Activated CD4-positive, alpha-beta memory T cell treated with anti-CD3 and anti-CD28 coated beads, Interleukin-2, amount 10 ng/mL, durations not matched to agents 7 days and 5 days (primary cell): ENCODE measurements at regions of chr13 and their contacts with region 1.

Region 1: DNA sequence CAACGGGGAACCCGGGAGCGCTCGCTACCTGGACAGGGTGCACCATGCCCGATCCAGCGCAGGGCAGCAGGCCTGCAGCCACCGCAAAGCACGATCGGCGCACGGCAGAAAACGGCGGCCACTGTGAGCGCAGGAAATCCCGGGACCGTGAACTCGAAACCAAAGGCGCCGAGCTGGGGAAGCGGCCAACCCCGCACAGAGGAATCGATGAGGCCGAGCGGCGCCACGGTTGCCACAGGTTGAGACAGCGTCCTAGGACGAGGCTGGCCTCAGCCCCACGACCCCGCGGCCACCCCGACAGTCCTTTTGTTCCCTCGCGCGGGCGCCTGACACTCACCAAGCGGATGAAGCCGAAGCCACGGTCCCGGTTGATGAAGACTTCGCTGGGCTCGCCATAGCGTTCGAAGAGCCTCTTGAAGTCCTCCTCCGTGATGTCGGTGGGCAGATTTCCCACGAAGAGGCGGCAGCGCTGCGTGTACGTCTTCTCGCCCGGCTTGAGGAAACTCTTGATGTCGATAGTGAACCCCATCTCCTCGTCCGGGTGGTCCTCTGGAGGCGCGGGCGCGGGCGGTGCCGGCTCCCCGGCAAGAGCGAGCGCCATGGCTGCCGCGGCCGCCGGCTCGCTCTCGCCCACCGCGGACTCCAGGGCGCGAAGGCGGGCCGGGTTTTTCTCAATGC is 557 bp downstream of the PSPC1 start:
- DNase-seq: peak; percentile 65
- H3K4me3 Mint-ChIP-seq: peak overlapping the region; percentile 98
- H3K27ac Mint-ChIP-seq: peak overlapping the region; percentile 99
- H3K4me1 Mint-ChIP-seq: peaks cover 14% of the 10 kb centered on the region
- H3K27me3 Mint-ChIP-seq: no peaks in the 10 kb centered on the region

Region 2: DNA sequence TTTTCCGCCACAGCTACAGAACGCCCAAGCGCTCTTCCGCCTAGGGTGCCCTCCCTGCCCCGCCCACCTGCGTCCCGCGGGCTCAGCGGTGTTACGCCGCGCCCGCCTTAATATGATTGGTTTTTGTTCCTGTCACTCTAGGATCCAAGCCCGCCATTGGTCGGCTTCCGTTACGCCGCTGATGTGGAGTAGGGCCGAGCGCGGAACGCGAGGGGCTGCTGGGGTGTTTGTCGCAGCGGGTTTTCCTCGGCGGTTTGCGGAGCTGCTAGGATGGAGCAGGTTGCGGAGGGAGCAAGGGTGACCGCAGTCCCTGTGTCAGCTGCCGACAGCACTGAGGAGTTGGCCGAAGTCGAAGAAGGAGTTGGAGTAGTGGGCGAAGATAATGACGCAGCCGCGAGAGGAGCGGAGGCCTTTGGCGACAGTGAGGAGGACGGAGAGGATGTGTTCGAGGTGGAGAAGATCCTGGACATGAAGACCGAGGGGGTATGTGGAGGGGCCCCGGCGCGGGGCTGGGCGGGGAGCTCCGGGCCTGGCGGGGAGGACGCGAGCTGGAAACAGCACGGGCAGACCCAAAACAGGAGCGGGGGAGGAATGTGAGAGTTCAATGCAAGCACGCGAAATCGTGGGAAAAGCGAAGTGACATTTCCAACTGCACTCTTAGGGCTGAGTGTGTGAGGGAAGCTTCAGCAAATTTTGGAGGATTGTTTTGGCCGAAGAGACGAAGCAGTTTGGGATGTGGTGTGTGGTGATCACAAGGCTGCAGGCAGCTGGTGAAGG is 148.5 kb before region 1 on chr13 and contains the start of gene MPHOSPH8:
- CTCF ChIA-PET with region 1: interaction called, 3 read pairs
- POLR2A ChIA-PET with region 1: interaction called, 15 read pairs
- DNase-seq: peak; percentile 95
- H3K4me3 Mint-ChIP-seq: peak within 1 kb of the TSS; percentile 100
- H3K27ac Mint-ChIP-seq: peak within 1 kb of the TSS; percentile 92
- H3K4me1 Mint-ChIP-seq: peaks cover 26% of the 10 kb centered on the region
- H3K27me3 Mint-ChIP-seq: no peaks in the 10 kb centered on the region
- total RNA-seq, gene MPHOSPH8: 44.4 to 47.2 TPM

Region 3: GRCh38 chr13:19766213-19766990 is 15.8 kb before region 1 on chr13:
- CTCF ChIA-PET with region 1: no interaction called
- POLR2A ChIA-PET with region 1: interaction called, 11 read pairs
- DNase-seq: no peak
- H3K4me3 Mint-ChIP-seq: no peak overlapping the region
- H3K27ac Mint-ChIP-seq: no peak overlapping the region
- H3K4me1 Mint-ChIP-seq: peaks cover 46% of the 10 kb centered on the region
- H3K27me3 Mint-ChIP-seq: no peaks in the 10 kb centered on the region

Region 4: GRCh38 chr13:19845758-19846157 is 63.6 kb after region 1 on chr13:
- CTCF ChIA-PET with region 1: no interaction called
- POLR2A ChIA-PET with region 1: interaction called, 11 read pairs
- DNase-seq: no peak
- H3K4me3 Mint-ChIP-seq: no peak overlapping the region
- H3K27ac Mint-ChIP-seq: no peak overlapping the region
- H3K4me1 Mint-ChIP-seq: peaks cover 9% of the 10 kb centered on the region
- H3K27me3 Mint-ChIP-seq: no peaks in the 10 kb centered on the region

Region 5: DNA sequence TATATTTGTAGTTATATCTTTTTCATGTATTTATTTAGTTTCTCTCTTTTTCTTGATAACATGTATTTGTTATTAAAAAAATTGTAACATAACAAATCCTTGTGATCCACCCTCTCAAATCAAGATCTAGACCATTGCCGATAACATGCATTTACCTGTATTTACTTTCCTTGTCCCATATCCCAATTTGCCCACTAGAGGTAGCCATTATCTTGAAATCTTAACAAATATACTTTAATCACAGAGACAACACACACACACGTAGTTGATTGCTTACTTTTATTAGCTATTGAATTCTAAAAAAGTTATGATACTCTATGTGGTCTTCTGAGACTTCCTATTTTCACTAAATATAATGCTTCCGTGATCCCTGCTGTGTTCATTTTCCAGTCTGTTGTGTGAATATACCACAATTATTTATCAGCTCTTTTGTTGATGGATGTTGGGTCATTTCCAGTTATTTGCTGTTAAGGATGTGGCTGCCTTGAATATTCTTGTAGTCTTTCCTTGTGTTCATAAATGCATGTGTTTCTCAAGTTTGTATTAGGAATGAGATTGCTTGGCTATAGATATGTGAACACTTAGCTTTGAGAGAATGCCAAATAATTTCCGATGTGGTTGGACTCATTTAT is 145.0 kb after region 1 on chr13:
- CTCF ChIA-PET with region 1: no interaction called
- POLR2A ChIA-PET with region 1: no interaction called
- DNase-seq: no peak
- H3K4me3 Mint-ChIP-seq: no peak overlapping the region
- H3K27ac Mint-ChIP-seq: no peak overlapping the region
- H3K4me1 Mint-ChIP-seq: no peaks in the 10 kb centered on the region
- H3K27me3 Mint-ChIP-seq: no peaks in the 10 kb centered on the region

Region 6: GRCh38 chr13:19959831-19960652 is 177.9 kb after region 1 on chr13:
- CTCF ChIA-PET with region 1: interaction called, 3 read pairs
- POLR2A ChIA-PET with region 1: interaction called, 10 read pairs
- DNase-seq: peak; percentile 89
- H3K4me3 Mint-ChIP-seq: peak overlapping the region; percentile 98
- H3K27ac Mint-ChIP-seq: peak overlapping the region; percentile 99
- H3K4me1 Mint-ChIP-seq: peaks cover 26% of the 10 kb centered on the region
- H3K27me3 Mint-ChIP-seq: peaks cover 10% of the 10 kb centered on the region